ENCODE measurements at regions of chr6 and their contacts with region 1.

Region 1: DNA sequence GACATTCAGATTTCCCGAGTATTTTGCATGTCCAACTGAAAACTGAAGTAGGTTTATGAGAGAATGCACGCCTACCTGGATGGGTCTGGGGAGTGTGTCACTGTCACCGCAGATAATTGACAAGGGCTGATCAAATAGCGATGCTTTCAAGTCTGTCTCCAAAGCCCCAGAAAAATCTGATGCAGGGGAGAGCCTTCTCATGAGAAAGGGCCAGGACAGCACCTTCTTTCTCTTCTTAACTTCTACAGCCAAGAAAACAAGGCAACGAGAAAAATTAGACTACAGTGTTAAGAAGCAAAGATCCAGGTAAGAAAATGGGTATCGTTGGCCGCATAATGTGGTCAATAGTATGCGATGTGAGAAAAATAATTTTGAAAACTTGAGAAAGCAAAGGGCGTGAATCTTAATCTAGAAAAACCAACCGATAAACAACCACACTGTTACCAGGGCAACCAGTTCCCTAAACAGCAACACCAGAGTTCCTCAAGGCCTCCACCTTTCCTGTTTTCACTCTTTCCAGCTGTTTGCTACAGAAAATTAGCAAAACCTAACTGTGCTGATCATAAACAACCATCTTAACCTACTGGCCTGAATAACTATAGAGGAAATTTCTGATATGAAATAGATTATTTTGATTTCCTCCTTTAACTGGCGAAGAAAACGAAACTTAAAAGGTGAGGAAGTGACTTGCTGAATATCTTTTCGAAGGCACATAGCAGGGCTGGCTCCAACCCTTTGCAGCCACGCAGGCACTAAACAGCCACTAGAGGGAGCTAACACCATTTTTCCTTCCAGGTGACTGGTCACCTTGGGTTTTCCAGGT is 2.6 kb downstream of the TAGAP start:
- DNase-seq: peak; percentile 82
- ATAC-seq: peak; percentile 21
- H3K4me3 Mint-ChIP-seq: peak overlapping the region; percentile 100
- H3K27ac Mint-ChIP-seq: peak overlapping the region; percentile 100
- H3K4me1 Mint-ChIP-seq: peaks cover 53% of the 10 kb centered on the region
- H3K27me3 Mint-ChIP-seq: no peaks in the 10 kb centered on the region
- CTCF ChIP-seq: peak; percentile 96

Region 2: GRCh38 chr6:158649289-158650143 is 392.7 kb before region 1 on chr6 and contains the start of gene SYTL3:
- CTCF ChIA-PET with region 1: no interaction called
- POLR2A ChIA-PET with region 1: interaction called, 12 read pairs
- intact Hi-C with region 1: no loop called
- DNase-seq: peak; percentile 94
- ATAC-seq: peak; percentile 60
- H3K4me3 Mint-ChIP-seq: peak within 1 kb of the TSS; percentile 83
- H3K27ac Mint-ChIP-seq: peak within 1 kb of the TSS; percentile 97
- H3K4me1 Mint-ChIP-seq: peaks cover 68% of the 10 kb centered on the region
- H3K27me3 Mint-ChIP-seq: peaks cover 2% of the 10 kb centered on the region
- CTCF ChIP-seq: no peak
- total RNA-seq, gene SYTL3: 151 to 163 TPM

Region 3: GRCh38 chr6:158972241-158973233 is 69.7 kb before region 1 on chr6:
- CTCF ChIA-PET with region 1: no interaction called
- POLR2A ChIA-PET with region 1: no interaction called
- intact Hi-C with region 1: no loop called
- DNase-seq: no peak
- ATAC-seq: peak; percentile 71
- H3K4me3 Mint-ChIP-seq: no peak overlapping the region
- H3K27ac Mint-ChIP-seq: no peak overlapping the region
- H3K4me1 Mint-ChIP-seq: no peaks in the 10 kb centered on the region
- H3K27me3 Mint-ChIP-seq: no peaks in the 10 kb centered on the region
- CTCF ChIP-seq: peak; percentile 81

Region 4: DNA sequence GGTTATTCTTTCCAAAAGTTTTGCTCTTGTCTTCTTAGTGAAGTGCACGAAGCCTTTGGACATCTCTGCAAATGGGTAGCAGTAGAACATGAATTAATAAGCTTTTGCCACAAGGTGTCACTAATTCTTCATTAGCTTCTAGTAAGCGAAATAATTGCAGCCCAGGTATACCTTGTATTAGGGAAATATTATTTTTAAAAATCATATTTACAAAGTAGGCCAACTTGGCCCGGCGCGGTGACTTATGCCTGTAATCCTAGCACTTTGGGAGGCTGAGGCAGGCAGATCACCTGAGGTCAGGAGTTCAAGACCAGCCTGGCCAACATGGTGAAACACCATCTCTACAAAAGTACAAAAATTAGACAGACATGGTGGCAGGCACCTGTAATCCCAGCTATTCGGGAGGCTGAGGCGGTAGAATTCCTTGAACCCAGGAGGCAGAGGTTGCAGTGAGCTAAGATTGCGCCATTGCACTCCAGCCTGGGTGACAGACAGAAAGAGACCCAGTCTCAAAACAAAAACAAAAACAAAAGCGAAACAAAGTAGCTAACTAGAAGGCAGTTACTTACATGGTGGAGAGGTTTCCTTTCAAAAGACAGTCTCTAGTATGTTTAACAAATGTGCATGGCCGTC is 33.4 kb before region 1 on chr6:
- CTCF ChIA-PET with region 1: interaction called, 113 read pairs
- POLR2A ChIA-PET with region 1: interaction called, 8 read pairs
- intact Hi-C with region 1: loop called (anchors 5 kb)
- DNase-seq: no peak
- ATAC-seq: peak; percentile 76
- H3K4me3 Mint-ChIP-seq: no peak overlapping the region
- H3K27ac Mint-ChIP-seq: peak overlapping the region; percentile 65
- H3K4me1 Mint-ChIP-seq: peaks cover 28% of the 10 kb centered on the region
- H3K27me3 Mint-ChIP-seq: no peaks in the 10 kb centered on the region
- CTCF ChIP-seq: peak; percentile 83

Region 5: GRCh38 chr6:159056003-159056402 is 13.8 kb after region 1 on chr6:
- CTCF ChIA-PET with region 1: interaction called, 29 read pairs
- POLR2A ChIA-PET with region 1: interaction called, 327 read pairs
- intact Hi-C with region 1: loop called (anchors 2 kb)
- DNase-seq: no peak
- ATAC-seq: no peak
- H3K4me3 Mint-ChIP-seq: peak overlapping the region; percentile 59
- H3K27ac Mint-ChIP-seq: peak overlapping the region; percentile 95
- H3K4me1 Mint-ChIP-seq: peaks cover 82% of the 10 kb centered on the region
- H3K27me3 Mint-ChIP-seq: no peaks in the 10 kb centered on the region
- CTCF ChIP-seq: no peak

Region 6: GRCh38 chr6:159074120-159074684 is 32.0 kb after region 1 on chr6:
- CTCF ChIA-PET with region 1: interaction called, 23 read pairs
- POLR2A ChIA-PET with region 1: interaction called, 327 read pairs
- intact Hi-C with region 1: no loop called
- DNase-seq: no peak
- ATAC-seq: no peak
- H3K4me3 Mint-ChIP-seq: peak overlapping the region; percentile 36
- H3K27ac Mint-ChIP-seq: no peak overlapping the region
- H3K4me1 Mint-ChIP-seq: peaks cover 83% of the 10 kb centered on the region
- H3K27me3 Mint-ChIP-seq: no peaks in the 10 kb centered on the region
- CTCF ChIP-seq: no peak

Region 7: DNA sequence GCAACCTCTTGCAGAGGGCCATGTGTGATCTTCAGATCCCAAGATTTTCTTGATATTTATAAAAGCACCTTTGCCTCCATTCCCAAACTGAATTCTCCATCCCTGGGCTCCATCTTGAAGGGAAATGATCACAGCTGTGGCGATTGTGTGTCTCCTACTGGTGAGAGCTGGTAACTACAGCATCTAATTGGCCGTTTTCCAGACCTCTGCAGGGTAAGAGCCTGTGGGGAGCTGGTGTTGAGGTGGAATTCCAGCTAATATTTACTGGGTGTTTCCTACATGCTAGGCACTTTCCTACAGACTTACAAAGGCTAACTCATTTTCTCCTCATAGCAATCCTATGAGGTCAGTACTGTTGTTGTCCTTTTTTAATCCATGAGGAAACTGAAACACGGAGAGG is 67.8 kb after region 1 on chr6:
- CTCF ChIA-PET with region 1: interaction called, 289 read pairs
- POLR2A ChIA-PET with region 1: interaction called, 766 read pairs
- intact Hi-C with region 1: loop called (anchors 2 kb)
- DNase-seq: peak; percentile 52
- ATAC-seq: no peak
- H3K4me3 Mint-ChIP-seq: no peak overlapping the region
- H3K27ac Mint-ChIP-seq: peak overlapping the region; percentile 40
- H3K4me1 Mint-ChIP-seq: peaks cover 52% of the 10 kb centered on the region
- H3K27me3 Mint-ChIP-seq: no peaks in the 10 kb centered on the region
- CTCF ChIP-seq: peak; percentile 95

Measured in activated CD8-positive, alpha-beta T cell treated with anti-CD3 and anti-CD28 coated beads for 36 hours (primary cell).